ENCODE measurements at regions of chr11 and their contacts with region 1.

Region 1: GRCh38 chr11:93543292-93543977 is at the start of gene SMCO4:
- DNase-seq: peak; percentile 36 to 87 (median 58)
- ATAC-seq: peak; percentile 74
- H3K4me3 ChIP-seq: peak within 1 kb of the TSS; percentile 74
- H3K4me3 Mint-ChIP-seq: peak within 1 kb of the TSS; percentile 98
- H3K27ac ChIP-seq: peak within 1 kb of the TSS; percentile 2 to 43
- H3K27ac Mint-ChIP-seq: peak within 1 kb of the TSS; percentile 85
- H3K4me1 ChIP-seq: peaks cover 24% of the 10 kb centered on the region
- H3K4me1 Mint-ChIP-seq: peaks cover 28% of the 10 kb centered on the region
- H3K27me3 ChIP-seq: no peaks in the 10 kb centered on the region
- H3K27me3 Mint-ChIP-seq: no peaks in the 10 kb centered on the region
- CTCF ChIP-seq: peak; percentile 54
- total RNA-seq, gene SMCO4: 0.30 TPM in 1 of 2 experiments, not detected in the other

Region 2: DNA sequence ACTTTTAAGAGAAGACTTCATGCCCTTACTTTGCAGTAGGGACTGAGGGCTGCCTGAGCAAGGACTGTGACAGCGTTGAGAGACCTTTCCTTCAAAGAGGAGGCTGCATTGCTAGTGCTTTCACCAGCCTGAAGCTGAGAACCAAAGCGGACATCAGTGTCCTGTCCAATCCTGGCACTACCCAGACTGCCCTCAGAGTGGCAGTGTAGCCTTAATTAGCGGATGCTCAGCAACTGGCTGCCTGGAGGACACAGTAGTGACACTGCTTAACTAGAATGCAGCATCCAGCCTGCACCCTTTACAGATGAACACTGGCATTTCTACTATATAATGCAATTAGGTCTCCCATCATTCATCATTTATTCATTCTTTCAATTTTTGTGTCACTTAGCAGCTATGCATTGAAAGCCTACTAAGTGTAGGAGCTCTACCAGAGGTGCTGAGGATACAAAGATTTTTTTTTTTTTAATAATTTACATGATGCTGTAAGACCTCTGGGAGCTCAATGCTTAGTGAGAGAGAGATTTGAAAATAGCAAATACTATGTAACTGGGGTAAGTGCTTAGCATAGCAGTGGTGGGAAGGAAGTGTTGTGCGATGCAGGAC is 308.7 kb before region 1 on chr11:
- CTCF ChIA-PET with region 1: interaction called, 4 read pairs
- POLR2A ChIA-PET with region 1: no interaction called
- intact Hi-C with region 1: loop called (anchors 2 kb)
- DNase-seq: peak; percentile 44 to 79 (median 60)
- ATAC-seq: peak; percentile 100
- H3K4me3 ChIP-seq: no peak overlapping the region
- H3K4me3 Mint-ChIP-seq: no peak overlapping the region
- H3K27ac ChIP-seq: no peak overlapping the region
- H3K27ac Mint-ChIP-seq: no peak overlapping the region
- H3K4me1 ChIP-seq: no peaks in the 10 kb centered on the region
- H3K4me1 Mint-ChIP-seq: no peaks in the 10 kb centered on the region
- H3K27me3 ChIP-seq: peaks cover 0 to 16% of the 10 kb centered on the region in 2 experiments
- H3K27me3 Mint-ChIP-seq: peaks cover 41% of the 10 kb centered on the region
- CTCF ChIP-seq: peak; percentile 80

Region 3: DNA sequence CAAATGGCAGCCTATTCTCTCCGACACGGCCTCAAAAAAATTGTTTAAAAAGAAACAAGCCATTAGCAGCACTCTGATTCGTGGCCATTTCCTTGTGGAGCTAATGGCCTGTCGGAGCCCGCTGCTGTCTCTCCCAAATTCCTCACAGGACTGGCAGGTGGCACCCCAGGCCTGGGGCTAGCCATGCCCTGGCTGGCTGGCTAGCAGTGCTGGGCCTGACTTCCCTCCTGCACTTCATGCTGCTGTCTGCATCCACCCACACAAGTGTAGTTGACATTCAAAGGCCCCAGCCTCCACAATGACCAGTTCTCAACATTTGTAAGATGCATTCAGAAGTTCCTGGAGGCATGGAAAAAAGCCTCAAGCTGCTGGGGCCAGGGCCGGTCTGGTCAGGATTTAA is 61.7 kb before region 1 on chr11:
- CTCF ChIA-PET with region 1: no interaction called
- POLR2A ChIA-PET with region 1: no interaction called
- intact Hi-C with region 1: loop called in 1 of 2 experiments (anchors 5 kb)
- DNase-seq: no peak
- ATAC-seq: no peak
- H3K4me3 ChIP-seq: no peak overlapping the region
- H3K4me3 Mint-ChIP-seq: no peak overlapping the region
- H3K27ac ChIP-seq: no peak overlapping the region
- H3K27ac Mint-ChIP-seq: no peak overlapping the region
- H3K4me1 ChIP-seq: no peaks in the 10 kb centered on the region
- H3K4me1 Mint-ChIP-seq: no peaks in the 10 kb centered on the region
- H3K27me3 ChIP-seq: no peaks in the 10 kb centered on the region
- H3K27me3 Mint-ChIP-seq: no peaks in the 10 kb centered on the region
- CTCF ChIP-seq: no peak

Region 4: DNA sequence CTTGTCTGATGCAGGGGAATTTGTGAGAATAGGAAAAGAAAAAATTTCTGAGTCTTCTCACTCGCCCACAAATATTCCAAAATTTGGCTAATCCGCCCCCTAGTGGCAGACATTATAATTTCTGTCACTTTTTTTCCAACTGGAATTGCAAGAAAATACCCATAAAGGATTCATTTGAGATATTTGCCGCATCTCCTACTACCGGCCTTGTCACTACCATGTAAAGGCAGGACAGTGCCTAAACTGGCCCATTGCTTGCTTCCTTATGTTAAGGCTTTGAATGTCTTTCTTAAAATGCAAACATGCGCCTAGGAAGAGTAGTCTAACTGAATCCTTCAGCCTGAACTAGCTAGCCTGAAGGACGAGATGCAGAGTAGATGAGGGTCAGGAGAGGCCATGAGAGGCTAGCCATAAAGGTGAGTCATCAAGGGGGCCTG is 108.7 kb after region 1 on chr11:
- CTCF ChIA-PET with region 1: no interaction called
- POLR2A ChIA-PET with region 1: no interaction called
- intact Hi-C with region 1: loop called (anchors 5 to 10 kb)
- DNase-seq: peak in 5 of 14 experiments; percentile 19 to 63 (median 47)
- ATAC-seq: peak; percentile 17
- H3K4me3 ChIP-seq: no peak overlapping the region
- H3K4me3 Mint-ChIP-seq: no peak overlapping the region
- H3K27ac ChIP-seq: no peak overlapping the region
- H3K27ac Mint-ChIP-seq: no peak overlapping the region
- H3K4me1 ChIP-seq: peaks cover 5% of the 10 kb centered on the region
- H3K4me1 Mint-ChIP-seq: peaks cover 13% of the 10 kb centered on the region
- H3K27me3 ChIP-seq: no peaks in the 10 kb centered on the region
- H3K27me3 Mint-ChIP-seq: peaks cover 5% of the 10 kb centered on the region
- CTCF ChIP-seq: peak; percentile 83

Measured in CD4-positive, alpha-beta T cell (primary cell).